Activated B cell treated with CpG ODN at 0.5 μM for 24 hours (primary cell): ENCODE measurements at regions of chr4 and their contacts with region 1.

Region 1: DNA sequence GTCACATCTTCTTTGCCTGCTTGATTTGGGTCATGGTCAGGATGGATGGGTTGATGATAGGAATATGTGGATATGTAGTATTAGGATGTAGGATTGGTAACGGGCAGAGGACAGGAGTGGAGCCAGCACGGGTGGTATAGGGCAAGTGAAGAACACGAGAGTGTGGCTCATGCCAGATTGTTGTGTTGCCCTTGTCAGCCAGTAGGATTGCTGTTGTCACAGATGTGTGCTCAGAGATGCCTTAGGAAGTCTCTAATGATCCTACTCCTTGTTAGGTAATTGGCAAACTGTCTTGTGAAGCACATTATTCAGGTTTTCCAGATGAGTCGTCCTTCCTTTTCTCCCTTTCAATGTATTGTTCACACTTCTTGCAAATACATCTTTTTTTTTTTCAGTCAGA is 5.5 kb downstream of the ATP10D start:
- DNase-seq: no peak
- ATAC-seq: peak; percentile 88
- H3K4me3 Mint-ChIP-seq: no peak overlapping the region
- H3K27ac Mint-ChIP-seq: peak overlapping the region; percentile 54
- H3K4me1 Mint-ChIP-seq: peaks cover 74% of the 10 kb centered on the region
- H3K27me3 Mint-ChIP-seq: no peaks in the 10 kb centered on the region
- CTCF ChIP-seq: peak; percentile 28

Region 2: DNA sequence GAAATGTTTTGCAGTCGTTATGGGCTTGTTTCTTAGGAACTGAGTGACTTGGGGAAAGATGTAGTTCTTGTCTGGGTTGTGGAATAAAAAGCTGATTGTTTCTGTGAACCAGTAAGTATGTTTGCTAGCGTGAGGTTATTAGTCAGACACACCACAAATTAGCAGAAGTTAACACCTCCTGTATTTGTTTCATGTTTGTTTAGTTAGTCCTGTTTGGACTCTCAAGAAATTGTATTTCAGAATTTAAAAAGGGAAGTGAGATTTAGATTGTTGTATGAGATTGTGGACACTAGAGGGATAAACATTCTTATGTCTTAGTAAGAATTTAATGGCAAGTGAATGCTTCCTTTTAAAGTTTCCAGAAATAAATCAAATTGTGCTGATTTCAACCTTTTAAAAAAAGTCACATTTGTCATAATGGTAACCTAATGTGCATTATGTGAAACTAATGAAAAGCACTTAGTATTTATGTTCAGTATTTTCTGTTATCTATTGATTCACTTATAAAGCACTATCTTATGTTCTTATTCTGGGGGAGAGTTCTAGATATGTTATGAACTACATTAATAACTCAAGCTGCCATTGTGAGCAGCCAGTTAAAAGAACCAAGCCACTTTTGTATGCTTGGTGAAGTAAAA is 20.1 kb after region 1 on chr4:
- CTCF ChIA-PET with region 1: interaction called, 7 read pairs
- POLR2A ChIA-PET with region 1: interaction called, 6 read pairs
- intact Hi-C with region 1: loop called (anchors 1 kb)
- DNase-seq: no peak
- ATAC-seq: peak; percentile 90
- H3K4me3 Mint-ChIP-seq: peak overlapping the region; percentile 21
- H3K27ac Mint-ChIP-seq: peak overlapping the region; percentile 76
- H3K4me1 Mint-ChIP-seq: peaks cover 70% of the 10 kb centered on the region
- H3K27me3 Mint-ChIP-seq: no peaks in the 10 kb centered on the region
- CTCF ChIP-seq: no peak

Region 3: DNA sequence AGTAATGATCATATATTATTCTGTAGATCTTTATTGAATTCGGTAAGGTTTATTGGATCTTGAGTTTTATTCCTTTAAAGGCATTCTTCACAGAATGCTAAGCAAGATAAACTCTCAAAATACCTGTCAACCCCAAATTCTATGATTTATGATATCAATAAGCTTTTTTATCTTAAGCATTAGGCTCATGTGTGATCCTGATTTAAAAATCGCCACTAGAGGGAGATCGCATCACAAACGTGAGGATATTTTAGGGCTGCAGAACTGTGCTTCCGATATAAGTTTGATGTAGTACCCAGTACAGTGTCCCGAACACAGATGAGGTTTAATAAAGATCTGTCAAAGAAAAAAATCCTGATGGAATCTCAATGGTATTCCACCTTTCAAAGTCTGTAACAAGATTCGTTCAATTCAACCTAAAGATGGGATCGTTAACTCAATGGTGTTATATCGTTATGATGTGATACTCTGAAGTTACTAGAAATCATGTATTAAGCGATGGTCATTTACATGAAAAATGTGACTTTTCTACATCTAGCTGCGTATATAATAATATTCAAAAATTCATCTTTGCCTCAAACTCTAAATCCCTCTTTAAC is 178.4 kb after region 1 on chr4:
- CTCF ChIA-PET with region 1: no interaction called
- POLR2A ChIA-PET with region 1: no interaction called
- intact Hi-C with region 1: loop called (anchors 1 kb)
- DNase-seq: no peak
- ATAC-seq: peak; percentile 54
- H3K4me3 Mint-ChIP-seq: no peak overlapping the region
- H3K27ac Mint-ChIP-seq: no peak overlapping the region
- H3K4me1 Mint-ChIP-seq: no peaks in the 10 kb centered on the region
- H3K27me3 Mint-ChIP-seq: peaks cover 7% of the 10 kb centered on the region
- CTCF ChIP-seq: peak; percentile 32